HEK293 (cell line): ENCODE measurements at regions of chr2 and their contacts with region 1.

Region 1: GRCh38 chr2:175964195-175964594 is 37.9 kb downstream of the LNPK start:
- H3K4me3 ChIP-seq: no peak overlapping the region
- H3K27ac ChIP-seq: no peak overlapping the region
- H3K4me1 ChIP-seq: no peaks in the 10 kb centered on the region
- CTCF ChIP-seq: no peak

Region 2: GRCh38 chr2:175976391-175977157 is 12.4 kb after region 1 on chr2:
- CTCF ChIA-PET with region 1: interaction called, 10 read pairs
- POLR2A ChIA-PET with region 1: no interaction called
- H3K4me3 ChIP-seq: no peak overlapping the region
- H3K27ac ChIP-seq: no peak overlapping the region
- H3K4me1 ChIP-seq: no peaks in the 10 kb centered on the region
- CTCF ChIP-seq: no peak

Region 3: GRCh38 chr2:176234156-176234555 is 270.0 kb after region 1 on chr2:
- CTCF ChIA-PET with region 1: no interaction called
- POLR2A ChIA-PET with region 1: no interaction called
- H3K4me3 ChIP-seq: no peak overlapping the region
- H3K27ac ChIP-seq: no peak overlapping the region
- H3K4me1 ChIP-seq: no peaks in the 10 kb centered on the region
- CTCF ChIP-seq: no peak